ENCODE measurements at regions of chr22 and their contacts with region 1.

Region 1: DNA sequence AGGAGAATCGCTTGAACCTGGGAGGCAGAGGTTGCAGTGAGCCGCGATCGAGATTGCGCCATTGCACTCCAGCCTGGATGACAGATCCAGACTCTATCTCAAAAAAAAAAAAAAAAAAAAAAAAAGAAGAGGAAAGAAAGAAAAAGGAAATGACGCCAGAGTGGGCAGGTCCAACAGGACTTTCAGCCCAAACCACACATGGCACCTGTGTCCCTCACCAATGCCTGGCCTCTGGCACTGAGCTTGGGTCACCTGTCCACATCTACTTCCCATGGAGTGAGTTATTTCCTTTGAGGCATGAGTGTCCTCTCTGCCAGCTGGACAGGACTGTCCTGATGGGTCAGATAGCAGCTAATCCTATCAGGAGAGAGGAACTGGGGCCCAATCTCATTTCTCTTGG is 15.2 kb upstream of the GCAT start:
- DNase-seq: peak in 1 of 2 experiments; percentile 55
- H3K4me3 ChIP-seq: no peak overlapping the region
- H3K27ac ChIP-seq: no peak overlapping the region
- H3K4me1 ChIP-seq: peaks cover 21% of the 10 kb centered on the region
- H3K27me3 ChIP-seq: no peaks in the 10 kb centered on the region
- CTCF ChIP-seq: no peak

Region 2: GRCh38 chr22:37623075-37624016 is 169.1 kb before region 1 on chr22:
- CTCF ChIA-PET with region 1: interaction called, 9 read pairs
- POLR2A ChIA-PET with region 1: no interaction called
- intact Hi-C with region 1: loop called (anchors 5 kb)
- DNase-seq: peak in 1 of 2 experiments; percentile 69
- H3K4me3 ChIP-seq: no peak overlapping the region
- H3K27ac ChIP-seq: no peak overlapping the region
- H3K4me1 ChIP-seq: no peaks in the 10 kb centered on the region
- H3K27me3 ChIP-seq: no peaks in the 10 kb centered on the region
- CTCF ChIP-seq: peak; percentile 99

Region 3: DNA sequence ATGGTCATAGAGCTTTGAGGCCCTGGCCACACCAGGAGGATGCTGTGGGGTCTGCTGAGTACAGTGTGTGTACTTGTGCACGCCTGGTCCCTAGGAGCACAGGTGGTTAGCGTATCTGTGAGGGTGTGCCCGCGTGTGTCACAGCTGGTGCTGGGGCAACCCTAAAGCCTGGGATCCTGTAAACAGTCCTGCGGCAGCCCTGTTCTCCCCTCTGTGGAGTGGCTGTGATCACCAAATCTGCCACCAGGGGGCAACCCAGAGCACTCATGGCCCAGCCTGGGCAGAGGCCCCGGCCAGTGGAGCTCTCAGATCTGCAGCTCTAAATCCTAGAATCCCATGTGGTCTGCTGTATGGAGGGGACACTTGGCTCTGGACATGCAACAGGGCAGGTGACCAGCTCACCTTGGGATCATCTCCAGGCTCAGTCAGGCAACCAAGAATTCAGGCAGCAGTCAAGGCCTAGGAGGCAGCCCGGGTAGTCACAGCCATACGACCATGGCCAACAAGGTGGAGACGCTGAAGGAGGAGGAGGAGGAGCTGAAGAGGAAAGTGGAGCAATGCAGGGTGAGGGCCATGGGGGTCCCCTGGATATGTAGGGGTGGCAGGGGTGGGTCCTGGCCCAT is 149.2 kb before region 1 on chr22:
- CTCF ChIA-PET with region 1: interaction called, 5 read pairs
- POLR2A ChIA-PET with region 1: no interaction called
- intact Hi-C with region 1: loop called (anchors 1 kb)
- DNase-seq: peak; percentile 65 to 86
- H3K4me3 ChIP-seq: no peak overlapping the region
- H3K27ac ChIP-seq: no peak overlapping the region
- H3K4me1 ChIP-seq: peaks cover 31% of the 10 kb centered on the region
- H3K27me3 ChIP-seq: no peaks in the 10 kb centered on the region
- CTCF ChIP-seq: peak; percentile 99

Measured in PC-9 (cell line).